Activated naive CD8-positive, alpha-beta T cell treated with anti-CD3 and anti-CD28 coated beads, Interleukin-2, amount 10 ng/mL, durations not matched to agents 7 days and 5 days (primary cell): ENCODE measurements at regions of chr1 and their contacts with region 1.

Region 1: GRCh38 chr1:248858891-248859889 is at the start of gene ZNF692:
- DNase-seq: peak; percentile 98
- ATAC-seq: peak; percentile 84
- H3K4me3 Mint-ChIP-seq: peak within 1 kb of the TSS; percentile 94
- H3K27ac Mint-ChIP-seq: peak within 1 kb of the TSS; percentile 97
- H3K4me1 Mint-ChIP-seq: peaks cover 45% of the 10 kb centered on the region
- H3K27me3 Mint-ChIP-seq: peaks cover 3% of the 10 kb centered on the region
- total RNA-seq, gene ZNF692: 58.6 to 70.2 TPM

Region 2: GRCh38 chr1:248825909-248826760 is 33.1 kb before region 1 on chr1 and contains the start of gene SH3BP5L:
- POLR2A ChIA-PET with region 1: interaction called, 16 read pairs
- DNase-seq: peak; percentile 89
- ATAC-seq: peak; percentile 90
- H3K4me3 Mint-ChIP-seq: peak within 1 kb of the TSS; percentile 94
- H3K27ac Mint-ChIP-seq: peak within 1 kb of the TSS; percentile 98
- H3K4me1 Mint-ChIP-seq: peaks cover 32% of the 10 kb centered on the region
- H3K27me3 Mint-ChIP-seq: no peaks in the 10 kb centered on the region
- total RNA-seq, gene SH3BP5L: 32.8 to 34.7 TPM

Region 3: GRCh38 chr1:248873409-248873992 is 14.3 kb after region 1 on chr1:
- POLR2A ChIA-PET with region 1: interaction called, 20 read pairs
- DNase-seq: peak; percentile 93
- ATAC-seq: peak; percentile 84
- H3K4me3 Mint-ChIP-seq: peak overlapping the region; percentile 94
- H3K27ac Mint-ChIP-seq: peak overlapping the region; percentile 94
- H3K4me1 Mint-ChIP-seq: peaks cover 15% of the 10 kb centered on the region
- H3K27me3 Mint-ChIP-seq: peaks cover 12% of the 10 kb centered on the region

Region 4: GRCh38 chr1:248890549-248891498 is 31.6 kb after region 1 on chr1:
- POLR2A ChIA-PET with region 1: no interaction called
- DNase-seq: no peak
- ATAC-seq: no peak
- H3K4me3 Mint-ChIP-seq: no peak overlapping the region
- H3K27ac Mint-ChIP-seq: no peak overlapping the region
- H3K4me1 Mint-ChIP-seq: peaks cover 1% of the 10 kb centered on the region
- H3K27me3 Mint-ChIP-seq: peaks cover 21% of the 10 kb centered on the region